AG04450 (cell line): ENCODE measurements at regions of chr19 and their contacts with region 1.

Region 1: GRCh38 chr19:37007587-37008220 is 70.5 kb upstream of the ZNF420 start:
- DNase-seq: peak; percentile 7
- H3K4me3 ChIP-seq: peak overlapping the region; percentile 41
- H3K27ac ChIP-seq: no peak overlapping the region
- H3K27me3 ChIP-seq: no peaks in the 10 kb centered on the region
- CTCF ChIP-seq: no peak

Region 2: DNA sequence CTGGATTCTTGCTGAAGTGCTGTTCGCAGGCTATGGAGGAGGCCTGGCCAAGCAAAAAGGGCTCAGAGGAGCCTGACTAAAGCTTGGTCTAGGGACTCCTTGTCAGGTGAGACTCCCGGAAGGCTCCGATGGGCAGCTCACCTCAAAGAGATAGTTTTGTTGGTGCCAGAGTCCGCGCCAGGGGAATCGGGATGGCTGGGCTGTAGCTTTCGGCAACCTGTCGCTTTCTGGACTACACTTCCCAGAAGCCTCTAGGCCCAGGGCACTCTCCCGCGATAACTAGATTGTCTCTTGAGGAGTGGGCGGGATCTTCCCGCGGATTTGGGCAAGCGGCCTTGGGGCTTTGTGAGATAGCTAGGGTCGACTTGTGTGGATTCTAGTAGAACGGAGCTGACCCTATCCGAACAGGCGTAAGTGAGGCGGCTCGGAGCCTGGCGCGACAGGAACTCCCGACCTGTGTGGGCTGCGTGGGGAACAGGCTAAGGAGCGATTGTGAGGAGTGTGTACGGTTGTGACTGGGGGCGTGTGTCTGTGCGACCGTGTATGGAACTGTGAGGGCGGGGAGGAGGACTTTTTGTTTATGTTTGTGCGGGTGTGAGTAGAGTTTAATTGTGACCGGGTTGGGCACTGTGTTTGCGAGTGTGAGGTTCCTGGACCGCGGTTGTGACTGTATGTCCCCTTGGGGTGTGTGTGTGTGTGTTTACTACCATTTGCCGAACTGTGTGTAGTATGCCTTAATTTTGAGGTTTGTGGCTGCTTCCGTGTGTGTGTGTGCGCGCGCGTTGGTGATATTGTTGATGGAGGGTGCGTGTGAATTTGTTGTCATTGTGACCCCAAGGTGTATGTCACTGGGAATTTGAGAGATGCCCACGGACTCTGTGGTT is 156.9 kb before region 1 on chr19 and contains the start of gene ZNF345:
- CTCF ChIA-PET with region 1: no interaction called
- POLR2A ChIA-PET with region 1: no interaction called
- DNase-seq: peak; percentile 86
- H3K4me3 ChIP-seq: peak within 1 kb of the TSS; percentile 100
- H3K27ac ChIP-seq: peak within 1 kb of the TSS; percentile 65
- H3K27me3 ChIP-seq: no peaks in the 10 kb centered on the region
- CTCF ChIP-seq: no peak
- polyA plus RNA-seq, gene ZNF345: 2.3 and 2.6 TPM in 2 replicates

Region 3: GRCh38 chr19:36939153-36939552 is 68.6 kb before region 1 on chr19:
- CTCF ChIA-PET with region 1: no interaction called
- POLR2A ChIA-PET with region 1: no interaction called
- DNase-seq: no peak
- H3K4me3 ChIP-seq: no peak overlapping the region
- H3K27ac ChIP-seq: no peak overlapping the region
- H3K27me3 ChIP-seq: no peaks in the 10 kb centered on the region
- CTCF ChIP-seq: no peak

Region 4: GRCh38 chr19:37077934-37078725 is 70.4 kb after region 1 on chr19 and contains the start of gene ZNF420:
- CTCF ChIA-PET with region 1: interaction called, 3 read pairs
- POLR2A ChIA-PET with region 1: interaction called, 12 read pairs
- DNase-seq: peak; percentile 90
- H3K4me3 ChIP-seq: peak within 1 kb of the TSS; percentile 97
- H3K27ac ChIP-seq: no peak within 1 kb of the TSS
- H3K27me3 ChIP-seq: no peaks in the 10 kb centered on the region
- CTCF ChIP-seq: no peak
- polyA plus RNA-seq, gene ZNF420: 4.2 and 5.9 TPM in 2 replicates